Naive thymus-derived CD4-positive, alpha-beta T cell (primary cell): ENCODE measurements at regions of chr1 and their contacts with region 1.

Region 1: DNA sequence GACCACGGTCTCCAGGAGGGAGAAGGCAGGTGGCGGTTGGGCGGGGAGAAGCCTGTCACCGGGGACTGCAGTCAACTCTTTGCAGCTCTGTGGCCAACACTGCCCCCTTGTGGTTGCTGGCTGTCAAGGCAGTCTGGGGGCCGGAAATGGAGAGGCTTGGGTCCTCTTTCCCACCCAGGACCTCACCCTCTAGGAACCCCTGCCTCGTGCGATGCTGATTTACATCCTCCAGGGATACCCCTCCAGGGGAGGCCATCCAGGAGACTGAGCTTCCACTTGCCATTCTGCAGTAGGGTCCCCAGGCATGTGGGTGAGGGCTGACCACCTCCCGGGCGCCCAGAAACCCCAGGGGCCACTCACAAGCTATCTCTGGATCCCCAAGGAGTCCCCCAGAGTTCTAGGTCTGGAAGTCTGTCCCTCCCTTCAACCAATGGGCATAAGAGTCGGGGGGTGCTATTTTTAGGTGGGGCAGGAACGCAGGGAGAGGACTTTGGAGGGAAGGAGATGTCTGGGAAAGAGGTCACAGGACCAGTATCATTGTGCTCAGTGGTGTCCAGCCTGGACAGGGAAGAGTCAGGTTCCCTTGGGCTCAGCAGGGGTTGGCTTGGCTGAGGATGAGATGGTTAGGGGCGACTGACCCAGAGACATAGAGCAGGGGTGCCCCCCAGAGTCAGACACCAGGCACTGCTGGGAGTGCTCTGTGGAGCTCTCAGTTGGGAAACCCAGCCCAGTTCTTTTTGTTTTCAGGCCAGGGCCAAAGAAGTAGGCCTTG is 7.1 kb upstream of the GPR61 start:
- DNase-seq: peak; percentile 79 to 96 (median 87)
- ATAC-seq: peak; percentile 94
- H3K4me3 ChIP-seq: peak overlapping the region; percentile 57
- H3K4me3 Mint-ChIP-seq: peak overlapping the region; percentile 78 to 91 (median 86)
- H3K27ac ChIP-seq: no peak overlapping the region
- H3K27ac Mint-ChIP-seq: peak overlapping the region; percentile 66 to 95 (median 86)
- H3K4me1 ChIP-seq: peaks cover 11 to 28% of the 10 kb centered on the region in 2 donors
- H3K4me1 Mint-ChIP-seq: peaks cover 22 to 40% (median 30%) of the 10 kb centered on the region in 7 donors
- H3K27me3 ChIP-seq: no peaks in the 10 kb centered on the region
- H3K27me3 Mint-ChIP-seq: no peaks in the 10 kb centered on the region

Region 2: GRCh38 chr1:109263597-109264398 is 268.8 kb before region 1 on chr1:
- CTCF ChIA-PET with region 1: interaction called, 7 read pairs
- POLR2A ChIA-PET with region 1: no interaction called
- intact Hi-C with region 1: loop called (anchors 1 kb)
- DNase-seq: peak; percentile 57 to 86 (median 68)
- ATAC-seq: peak; percentile 92
- H3K4me3 ChIP-seq: no peak overlapping the region
- H3K4me3 Mint-ChIP-seq: peak overlapping the region in 1 of 10 donors; percentile 60
- H3K27ac ChIP-seq: no peak overlapping the region
- H3K27ac Mint-ChIP-seq: peak overlapping the region in 1 of 9 donors; percentile 36
- H3K4me1 ChIP-seq: no peaks in the 10 kb centered on the region
- H3K4me1 Mint-ChIP-seq: peaks cover 0 to 9% (median 0%) of the 10 kb centered on the region in 7 donors
- H3K27me3 ChIP-seq: no peaks in the 10 kb centered on the region
- H3K27me3 Mint-ChIP-seq: no peaks in the 10 kb centered on the region

Region 3: GRCh38 chr1:109282952-109283747 is 249.4 kb before region 1 on chr1 and contains the start of gene PSRC1:
- CTCF ChIA-PET with region 1: interaction called, 33 read pairs
- POLR2A ChIA-PET with region 1: interaction called, 5 read pairs
- intact Hi-C with region 1: loop called in 1 of 2 experiments (anchors 1 kb)
- DNase-seq: peak; percentile 78 to 94 (median 88)
- ATAC-seq: peak; percentile 98
- H3K4me3 ChIP-seq: peak within 1 kb of the TSS; percentile 92
- H3K4me3 Mint-ChIP-seq: peak within 1 kb of the TSS; percentile 89 to 99 (median 96)
- H3K27ac ChIP-seq: peak within 1 kb of the TSS; percentile 65
- H3K27ac Mint-ChIP-seq: peak within 1 kb of the TSS; percentile 55 to 94 (median 88)
- H3K4me1 ChIP-seq: peaks cover 8 to 11% of the 10 kb centered on the region in 2 donors
- H3K4me1 Mint-ChIP-seq: peaks cover 6 to 29% (median 14%) of the 10 kb centered on the region in 7 donors
- H3K27me3 ChIP-seq: no peaks in the 10 kb centered on the region
- H3K27me3 Mint-ChIP-seq: peaks cover 0 to 8% (median 0%) of the 10 kb centered on the region in 5 donors
- total RNA-seq, gene PSRC1: 0.38 to 16.1 (median 1.3) TPM in 4 of 5 experiments, not detected in the other

Region 4: GRCh38 chr1:109499661-109500536 is 32.7 kb before region 1 on chr1:
- CTCF ChIA-PET with region 1: interaction called, 1,240 read pairs
- POLR2A ChIA-PET with region 1: interaction called, 520 read pairs
- intact Hi-C with region 1: loop called (anchors 1 kb)
- DNase-seq: peak in 8 of 9 donors; percentile 50 to 69 (median 62)
- ATAC-seq: peak; percentile 28
- H3K4me3 ChIP-seq: peak overlapping the region; percentile 9
- H3K4me3 Mint-ChIP-seq: peak overlapping the region; percentile 28 to 98 (median 89)
- H3K27ac ChIP-seq: peak overlapping the region; percentile 95
- H3K27ac Mint-ChIP-seq: peak overlapping the region; percentile 87 to 99 (median 98)
- H3K4me1 ChIP-seq: peaks cover 72 to 84% of the 10 kb centered on the region in 2 donors
- H3K4me1 Mint-ChIP-seq: peaks cover 68 to 99% (median 93%) of the 10 kb centered on the region in 7 donors
- H3K27me3 ChIP-seq: no peaks in the 10 kb centered on the region
- H3K27me3 Mint-ChIP-seq: no peaks in the 10 kb centered on the region